Activated CD4-positive, alpha-beta T cell treated with anti-CD3 and anti-CD28 coated beads for 36 hours (primary cell): ENCODE measurements at regions of chr22 and their contacts with region 1.

Region 1: GRCh38 chr22:41780746-41781505 is 19.6 kb upstream of the CCDC134 start:
- DNase-seq: peak; percentile 95
- ATAC-seq: peak; percentile 94
- H3K4me3 Mint-ChIP-seq: peak overlapping the region; percentile 81
- H3K27ac Mint-ChIP-seq: peak overlapping the region; percentile 98
- H3K4me1 Mint-ChIP-seq: peaks cover 39% of the 10 kb centered on the region
- H3K27me3 Mint-ChIP-seq: no peaks in the 10 kb centered on the region

Region 2: GRCh38 chr22:41468381-41469217 is 312.3 kb before region 1 on chr22 and contains the starts of genes ACO2 and PHF5A:
- CTCF ChIA-PET with region 1: no interaction called
- POLR2A ChIA-PET with region 1: no interaction called
- intact Hi-C with region 1: no loop called
- DNase-seq: peak; percentile 98
- ATAC-seq: peak; percentile 94
- H3K4me3 Mint-ChIP-seq: peak within 1 kb of the TSS; percentile 90
- H3K27ac Mint-ChIP-seq: peak within 1 kb of the TSS; percentile 99
- H3K4me1 Mint-ChIP-seq: peaks cover 47% of the 10 kb centered on the region
- H3K27me3 Mint-ChIP-seq: no peaks in the 10 kb centered on the region
- total RNA-seq, gene ACO2: 95.4 to 106 TPM
- total RNA-seq, gene PHF5A: 54.5 to 61.1 TPM

Region 3: DNA sequence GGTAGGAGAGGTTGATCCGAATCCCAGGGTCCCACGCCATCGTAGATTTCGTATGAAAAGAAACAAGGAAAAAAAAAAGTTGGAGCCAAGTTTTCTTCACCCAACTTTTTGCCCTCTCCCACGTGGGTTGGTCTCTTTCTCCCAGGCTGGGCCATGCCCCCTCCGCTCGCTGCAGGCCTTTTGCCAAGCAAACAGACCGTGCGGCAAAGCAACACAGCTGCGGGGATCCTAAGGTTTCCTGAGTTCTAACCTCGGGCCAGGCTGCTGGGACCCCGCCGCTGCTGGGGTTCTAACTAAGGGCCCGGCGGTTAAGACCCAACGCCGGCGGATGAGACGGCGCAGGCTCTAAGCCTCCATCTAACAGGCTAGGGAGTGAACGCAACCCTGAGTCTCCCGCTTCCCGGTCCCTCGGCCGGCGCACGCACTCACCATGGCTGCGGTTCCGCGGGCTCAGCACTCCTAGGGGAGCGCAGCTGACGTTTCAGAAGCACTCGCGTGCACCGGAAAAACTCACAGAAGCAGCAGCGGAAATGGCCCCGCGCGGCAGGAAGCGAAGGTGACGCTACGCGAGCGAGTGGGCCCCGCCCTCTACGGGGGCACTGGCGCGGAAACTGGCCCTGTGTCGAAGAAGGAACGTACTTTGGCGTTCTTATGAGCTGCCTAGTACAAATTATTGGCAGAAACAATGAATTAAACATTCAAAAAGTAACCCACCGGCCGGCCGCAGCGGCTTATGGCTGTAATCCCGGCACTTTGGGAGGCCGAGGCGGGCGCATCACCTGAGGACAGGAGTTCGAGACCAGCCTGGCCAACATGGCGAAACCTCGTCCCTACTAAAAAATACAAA is 92.3 kb before region 1 on chr22 and contains the start of gene SNU13:
- CTCF ChIA-PET with region 1: interaction called, 3 read pairs
- POLR2A ChIA-PET with region 1: no interaction called
- intact Hi-C with region 1: loop called in 1 of 2 experiments (anchors 1 kb)
- DNase-seq: peak; percentile 96
- ATAC-seq: peak; percentile 93
- H3K4me3 Mint-ChIP-seq: peak within 1 kb of the TSS; percentile 98
- H3K27ac Mint-ChIP-seq: peak within 1 kb of the TSS; percentile 98
- H3K4me1 Mint-ChIP-seq: peaks cover 34% of the 10 kb centered on the region
- H3K27me3 Mint-ChIP-seq: no peaks in the 10 kb centered on the region
- total RNA-seq, gene SNU13: 275 to 281 TPM

Region 4: DNA sequence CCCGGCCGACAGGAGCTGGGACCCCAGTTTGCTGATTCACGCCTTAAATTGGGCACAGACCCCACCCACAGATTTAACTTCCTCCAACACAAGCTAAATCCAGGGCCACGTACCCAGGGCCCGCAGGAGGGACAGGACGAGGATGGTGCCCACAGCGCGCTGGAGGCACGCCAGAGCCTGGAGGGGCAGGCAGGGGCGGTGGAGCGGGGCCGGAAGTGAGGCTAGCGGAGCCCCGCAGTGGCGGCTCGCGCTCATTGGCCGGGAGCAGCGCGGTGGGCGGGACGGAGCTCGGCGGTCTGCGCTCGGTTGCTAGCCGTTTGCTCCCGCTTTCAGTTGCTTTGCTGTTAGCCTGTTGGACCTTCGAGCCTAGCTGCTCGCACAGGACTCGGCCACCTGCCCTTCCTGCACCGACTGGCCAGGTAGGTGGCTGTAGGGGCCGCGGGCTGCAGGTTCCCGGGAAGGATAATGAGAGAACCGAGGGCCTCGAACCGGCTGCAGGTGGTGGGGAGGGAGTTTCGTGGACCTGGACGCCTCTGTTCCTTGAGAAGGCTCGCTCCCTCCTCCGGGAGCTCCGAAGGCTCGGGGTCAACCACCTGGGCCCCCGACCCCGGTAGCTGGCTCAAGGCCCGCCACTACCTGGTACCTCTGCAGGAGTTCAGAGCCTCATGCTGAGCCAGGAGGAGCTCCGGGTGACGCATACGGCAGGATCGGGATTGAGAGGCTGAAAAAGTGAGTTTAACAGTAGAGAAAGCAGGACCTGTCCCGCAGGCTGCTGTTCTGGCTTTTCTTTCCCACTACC is 19.6 kb after region 1 on chr22 and contains the start of gene CCDC134:
- CTCF ChIA-PET with region 1: interaction called, 63 read pairs
- POLR2A ChIA-PET with region 1: interaction called, 64 read pairs
- intact Hi-C with region 1: loop called (anchors 1 kb)
- DNase-seq: peak; percentile 95
- ATAC-seq: peak; percentile 98
- H3K4me3 Mint-ChIP-seq: peak within 1 kb of the TSS; percentile 91
- H3K27ac Mint-ChIP-seq: peak within 1 kb of the TSS; percentile 96
- H3K4me1 Mint-ChIP-seq: peaks cover 38% of the 10 kb centered on the region
- H3K27me3 Mint-ChIP-seq: no peaks in the 10 kb centered on the region
- total RNA-seq, gene CCDC134: 14.7 to 15.2 TPM

Region 5: DNA sequence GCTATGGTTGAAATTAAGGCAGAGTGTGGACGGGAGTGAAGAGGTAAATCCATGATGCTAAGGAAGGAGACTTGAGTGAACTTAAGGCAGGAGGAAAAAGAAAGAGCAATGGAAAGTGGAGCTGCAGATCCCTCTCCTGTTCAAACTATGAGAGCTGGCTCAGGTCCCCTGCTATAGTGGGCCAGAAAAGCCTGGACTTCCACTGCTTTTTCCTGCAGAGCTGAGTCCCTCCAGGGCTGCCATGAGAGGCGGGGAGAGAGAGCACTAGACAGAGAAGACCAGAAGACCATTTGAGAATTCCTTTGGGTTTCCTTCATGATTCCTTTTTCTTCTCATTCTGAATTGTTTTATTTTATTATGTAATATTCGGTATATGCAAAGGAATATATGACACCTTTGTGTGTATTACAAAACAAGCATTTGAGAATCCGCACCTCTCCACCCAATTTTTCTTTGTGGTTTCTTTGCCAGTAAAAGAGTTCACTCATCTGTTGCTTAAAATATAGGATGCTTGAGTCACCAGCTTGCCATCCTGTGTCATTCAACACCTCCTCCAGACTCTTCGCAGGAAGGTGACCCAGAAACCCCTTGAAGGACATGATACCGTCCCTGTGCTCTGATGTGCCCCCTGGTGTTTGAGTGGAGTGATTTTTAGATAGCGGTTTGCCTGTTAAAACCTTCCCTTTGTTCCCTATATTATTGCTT is 76.4 kb after region 1 on chr22:
- CTCF ChIA-PET with region 1: interaction called, 3 read pairs
- POLR2A ChIA-PET with region 1: interaction called, 6 read pairs
- intact Hi-C with region 1: loop called in 1 of 2 experiments (anchors 5 kb)
- DNase-seq: peak; percentile 89
- ATAC-seq: peak; percentile 71
- H3K4me3 Mint-ChIP-seq: no peak overlapping the region
- H3K27ac Mint-ChIP-seq: peak overlapping the region; percentile 95
- H3K4me1 Mint-ChIP-seq: peaks cover 76% of the 10 kb centered on the region
- H3K27me3 Mint-ChIP-seq: no peaks in the 10 kb centered on the region

Region 6: GRCh38 chr22:42007922-42008321 is 227.0 kb after region 1 on chr22:
- CTCF ChIA-PET with region 1: no interaction called
- POLR2A ChIA-PET with region 1: no interaction called
- intact Hi-C with region 1: no loop called
- DNase-seq: no peak
- ATAC-seq: no peak
- H3K4me3 Mint-ChIP-seq: no peak overlapping the region
- H3K27ac Mint-ChIP-seq: no peak overlapping the region
- H3K4me1 Mint-ChIP-seq: peaks cover 3% of the 10 kb centered on the region
- H3K27me3 Mint-ChIP-seq: peaks cover 11% of the 10 kb centered on the region

Region 7: GRCh38 chr22:42856865-42857704 is 1076.2 kb after region 1 on chr22 and contains the start of gene ARFGAP3:
- CTCF ChIA-PET with region 1: no interaction called
- POLR2A ChIA-PET with region 1: no interaction called
- intact Hi-C with region 1: loop called in 1 of 2 experiments (anchors 5 kb)
- DNase-seq: peak; percentile 98
- ATAC-seq: peak; percentile 91
- H3K4me3 Mint-ChIP-seq: peak within 1 kb of the TSS; percentile 83
- H3K27ac Mint-ChIP-seq: peak within 1 kb of the TSS; percentile 85
- H3K4me1 Mint-ChIP-seq: peaks cover 11% of the 10 kb centered on the region
- H3K27me3 Mint-ChIP-seq: peaks cover 6% of the 10 kb centered on the region
- total RNA-seq, gene ARFGAP3: 22.5 to 23.0 TPM